ENCODE measurements at regions of chr19 and their contacts with region 1.

Region 1: DNA sequence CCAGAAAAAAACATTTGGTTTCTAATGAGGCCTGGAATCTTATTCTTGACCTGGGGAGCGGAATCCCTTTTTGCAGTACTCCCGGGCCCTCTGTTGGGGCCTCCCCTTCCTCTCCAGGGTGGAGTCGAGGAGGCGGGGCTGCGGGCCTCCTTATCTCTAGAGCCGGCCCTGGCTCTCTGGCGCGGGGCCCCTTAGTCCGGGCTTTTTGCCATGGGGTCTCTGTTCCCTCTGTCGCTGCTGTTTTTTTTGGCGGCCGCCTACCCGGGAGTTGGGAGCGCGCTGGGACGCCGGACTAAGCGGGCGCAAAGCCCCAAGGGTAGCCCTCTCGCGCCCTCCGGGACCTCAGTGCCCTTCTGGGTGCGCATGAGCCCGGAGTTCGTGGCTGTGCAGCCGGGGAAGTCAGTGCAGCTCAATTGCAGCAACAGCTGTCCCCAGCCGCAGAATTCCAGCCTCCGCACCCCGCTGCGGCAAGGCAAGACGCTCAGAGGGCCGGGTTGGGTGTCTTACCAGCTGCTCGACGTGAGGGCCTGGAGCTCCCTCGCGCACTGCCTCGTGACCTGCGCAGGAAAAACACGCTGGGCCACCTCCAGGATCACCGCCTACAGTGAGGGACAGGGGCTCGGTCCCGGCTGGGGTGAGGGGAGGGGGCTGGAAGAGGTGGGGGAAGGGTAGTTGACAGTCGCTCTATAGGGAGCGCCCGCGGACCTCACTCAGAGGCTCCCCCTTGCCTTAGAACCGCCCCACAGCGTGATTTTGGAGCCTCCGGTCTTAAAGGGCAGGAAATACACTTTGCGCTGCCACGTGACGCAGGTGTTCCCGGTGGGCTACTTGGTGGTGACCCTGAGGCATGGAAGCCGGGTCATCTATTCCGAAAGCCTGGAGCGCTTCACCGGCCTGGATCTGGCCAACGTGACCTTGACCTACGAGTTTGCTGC is at the start of gene ICAM4:
- DNase-seq: peak; percentile 65 to 83 (median 78)
- H3K4me3 ChIP-seq: peak within 1 kb of the TSS in 6 of 7 experiments; percentile 36 to 76 (median 62)
- H3K27ac ChIP-seq: peak within 1 kb of the TSS in 1 of 2 experiments; percentile 73
- H3K4me1 ChIP-seq: peaks cover 0 to 75% (median 71%) of the 10 kb centered on the region in 4 experiments
- H3K27me3 ChIP-seq: peaks cover 0 to 24% (median 21%) of the 10 kb centered on the region in 5 experiments

Region 2: DNA sequence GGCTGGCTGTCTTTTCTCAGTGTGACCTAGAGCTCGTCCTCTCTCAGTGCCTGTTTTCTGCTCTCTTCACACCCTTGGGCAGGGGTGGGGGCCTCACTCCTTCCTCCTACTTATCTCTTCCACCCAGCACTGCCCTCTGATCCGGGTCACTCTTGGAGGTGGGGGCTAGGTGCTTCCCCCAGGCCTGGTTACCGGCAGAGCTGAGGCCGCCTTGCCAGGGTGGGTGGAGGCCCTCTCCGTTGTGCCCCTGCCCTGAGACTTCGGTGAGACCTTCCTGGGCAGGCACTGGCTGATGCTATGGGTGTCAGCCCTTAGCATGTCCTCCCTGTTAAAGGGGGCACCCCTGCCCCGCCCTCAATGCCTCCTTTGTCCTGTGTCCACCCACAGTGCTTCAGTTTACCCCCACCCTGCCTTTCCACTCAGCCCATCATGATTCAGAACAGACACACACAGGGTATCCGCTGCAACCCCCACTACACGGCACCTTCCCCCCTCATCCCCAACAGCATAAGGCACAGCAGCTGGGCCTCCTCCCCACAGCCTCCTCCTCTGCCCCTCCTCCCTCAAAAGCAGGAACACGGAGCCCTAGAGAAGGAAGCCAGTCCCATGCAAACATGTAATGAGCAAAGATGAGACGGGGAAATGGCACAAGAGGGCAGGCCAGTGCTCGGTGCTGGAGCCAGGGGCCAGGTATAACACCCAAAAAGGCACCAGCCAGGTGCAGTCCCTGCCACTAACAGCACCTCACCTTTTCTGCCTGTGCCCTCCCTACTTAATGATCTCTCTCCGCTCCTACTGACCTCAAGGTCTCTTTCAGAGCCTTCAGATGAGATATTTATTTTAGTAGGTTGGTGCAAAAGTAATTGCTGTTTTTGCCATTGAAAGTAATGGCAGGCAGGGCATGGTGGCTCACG is 12.7 kb after region 1 on chr19:
- CTCF ChIA-PET with region 1: interaction called, 21 read pairs
- POLR2A ChIA-PET with region 1: interaction called, 11 read pairs
- DNase-seq: peak; percentile 80 to 96 (median 94)
- H3K4me3 ChIP-seq: peak overlapping the region in 4 of 7 experiments; percentile 6 to 43 (median 28)
- H3K27ac ChIP-seq: peak overlapping the region; percentile 59 to 82
- H3K4me1 ChIP-seq: peaks cover 5 to 72% (median 56%) of the 10 kb centered on the region in 4 experiments
- H3K27me3 ChIP-seq: peaks cover 0 to 19% (median 11%) of the 10 kb centered on the region in 5 experiments

Region 3: DNA sequence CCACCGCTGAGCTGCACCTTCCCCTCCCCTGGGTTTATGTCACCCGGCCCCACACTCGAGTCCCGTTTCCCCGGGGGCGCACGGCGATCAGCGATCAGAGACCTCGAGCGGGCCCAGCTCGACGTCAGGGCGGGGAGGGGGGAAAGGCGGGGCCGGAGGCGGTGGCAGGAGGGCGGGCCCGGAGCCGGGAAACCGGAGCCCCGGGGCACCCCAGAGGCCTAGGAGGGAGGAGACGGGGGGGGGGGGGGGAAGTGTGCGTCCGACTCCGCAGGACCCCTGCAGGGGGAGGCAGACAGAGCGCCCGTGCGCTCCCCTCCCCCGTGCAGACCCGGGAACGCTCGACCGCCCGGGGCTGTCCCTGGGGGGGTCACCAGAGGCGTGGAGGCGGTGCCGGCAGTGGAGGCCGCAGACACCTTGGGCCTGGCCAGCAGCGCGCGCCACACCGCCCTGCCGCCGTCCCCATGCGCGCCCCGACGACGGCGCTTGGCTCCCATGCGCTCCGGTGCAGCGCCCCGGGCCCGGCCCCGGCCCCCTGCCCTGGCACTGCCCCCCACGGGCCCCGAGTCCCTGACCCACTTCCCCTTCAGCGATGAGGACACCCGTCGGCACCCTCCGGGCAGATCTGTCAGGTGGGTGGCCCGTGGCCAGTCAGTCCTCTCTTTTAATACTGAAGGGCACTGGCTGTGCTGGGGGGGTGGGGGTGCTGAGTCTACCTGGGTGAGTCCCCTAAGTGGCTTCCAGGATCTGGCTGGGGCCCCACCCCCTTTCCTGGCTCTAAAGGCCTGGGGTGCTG is 145.1 kb after region 1 on chr19:
- CTCF ChIA-PET with region 1: no interaction called
- POLR2A ChIA-PET with region 1: no interaction called
- DNase-seq: peak in 2 of 3 donors; percentile 44 to 58
- H3K4me3 ChIP-seq: peak overlapping the region in 4 of 7 experiments; percentile 23 to 55 (median 41)
- H3K27ac ChIP-seq: no peak overlapping the region
- H3K4me1 ChIP-seq: peaks cover 4 to 39% (median 32%) of the 10 kb centered on the region in 4 experiments
- H3K27me3 ChIP-seq: peaks cover 10 to 52% (median 18%) of the 10 kb centered on the region in 5 experiments

Region 4: GRCh38 chr19:10461047-10461790 is 174.1 kb after region 1 on chr19:
- CTCF ChIA-PET with region 1: no interaction called
- POLR2A ChIA-PET with region 1: no interaction called
- DNase-seq: peak; percentile 91 to 96 (median 96)
- H3K4me3 ChIP-seq: peak overlapping the region; percentile 18 to 70 (median 55)
- H3K27ac ChIP-seq: no peak overlapping the region
- H3K4me1 ChIP-seq: peaks cover 0 to 10% (median 8%) of the 10 kb centered on the region in 4 experiments
- H3K27me3 ChIP-seq: peaks cover 0 to 2% (median 0%) of the 10 kb centered on the region in 5 experiments